ENCODE measurements at regions of chr3 and their contacts with region 1.

Region 1: DNA sequence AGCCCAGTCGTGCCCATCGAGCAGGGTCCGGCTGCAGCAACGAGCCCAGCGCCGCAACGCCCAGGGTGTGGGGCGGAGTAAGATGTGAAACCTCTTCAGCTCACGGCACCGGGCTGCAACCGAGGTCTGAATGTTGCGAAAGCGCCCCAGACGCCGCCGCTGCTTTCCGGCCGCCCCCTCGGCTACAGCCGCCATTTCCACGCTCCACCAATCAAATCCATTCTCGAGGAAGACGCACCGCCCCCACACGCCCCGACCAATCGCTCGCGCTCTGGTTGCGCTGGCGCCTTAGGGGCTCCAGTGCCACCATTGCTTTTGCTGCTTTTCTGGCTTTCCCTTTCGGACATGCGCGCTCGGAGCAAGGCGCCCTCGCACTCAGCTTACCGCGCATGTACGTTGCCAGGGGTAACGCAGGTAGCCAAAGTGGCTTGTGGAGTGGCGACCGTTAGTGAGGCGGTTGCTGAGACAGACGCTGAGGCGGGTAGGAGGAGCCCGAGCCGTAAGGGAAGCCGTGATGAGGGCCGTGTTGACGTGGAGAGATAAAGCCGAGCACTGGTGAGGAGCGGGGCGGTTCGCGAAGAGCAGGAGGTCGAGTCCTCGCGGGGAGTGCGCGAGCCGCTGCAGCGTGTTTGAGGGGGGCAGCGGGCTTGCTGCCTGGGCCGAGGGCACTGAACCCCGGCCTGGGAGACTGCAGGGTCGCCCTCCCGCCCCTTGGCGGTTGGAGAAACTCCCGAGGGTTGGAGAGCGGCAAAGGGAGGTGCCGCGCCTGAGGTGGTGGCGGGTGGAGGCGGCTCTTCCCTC is at the starts of genes IFT122 and MBD4:
- DNase-seq: peak; percentile 99
- ATAC-seq: peak; percentile 90
- H3K4me3 Mint-ChIP-seq: peak within 1 kb of the TSS; percentile 100
- H3K27ac Mint-ChIP-seq: peak within 1 kb of the TSS; percentile 91
- H3K4me1 Mint-ChIP-seq: peaks cover 63% of the 10 kb centered on the region
- H3K27me3 Mint-ChIP-seq: no peaks in the 10 kb centered on the region
- total RNA-seq, gene IFT122: 18.4 to 22.6 TPM
- total RNA-seq, gene MBD4: 51.3 to 52.4 TPM

Region 2: DNA sequence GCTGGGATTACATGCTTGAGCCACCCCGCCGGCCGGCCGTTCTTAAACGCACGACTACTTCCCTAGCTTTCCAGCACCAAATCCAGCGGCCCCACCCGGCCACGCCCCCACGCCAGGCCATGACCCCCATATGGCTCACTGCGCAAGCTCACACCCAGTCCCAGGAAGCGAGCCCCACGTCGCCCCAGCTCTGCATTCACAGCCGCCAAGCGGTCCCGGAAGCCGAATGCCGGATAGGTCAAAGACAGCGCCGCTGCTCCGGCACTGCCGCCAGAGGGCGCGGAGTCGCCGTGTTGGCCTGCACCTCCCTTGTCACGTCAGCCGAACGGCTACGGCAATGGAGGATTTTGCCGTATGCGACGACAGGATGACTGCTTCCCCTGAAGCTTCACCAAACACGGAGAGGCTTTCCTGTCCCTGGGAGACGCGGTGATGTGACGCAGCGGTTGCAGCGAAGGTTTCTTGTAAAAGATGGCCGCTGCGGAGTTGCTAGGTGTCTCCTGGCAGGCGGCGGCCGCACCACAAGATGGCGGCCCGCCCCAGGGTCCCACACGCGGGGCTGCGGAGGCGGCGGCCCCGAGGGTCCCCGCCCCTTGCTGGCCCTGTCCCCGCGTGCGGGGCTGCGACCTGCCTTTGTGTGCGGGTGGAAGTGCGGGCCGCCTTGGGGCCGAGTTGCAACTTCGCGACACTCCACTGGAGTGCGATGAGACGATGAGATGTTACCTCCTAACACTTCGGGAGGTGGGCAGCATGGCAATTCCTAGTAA is 759.2 kb before region 1 on chr3:
- CTCF ChIA-PET with region 1: no interaction called
- POLR2A ChIA-PET with region 1: no interaction called
- intact Hi-C with region 1: loop called in 1 of 2 experiments (anchors 2 kb)
- DNase-seq: peak; percentile 98
- ATAC-seq: peak; percentile 98
- H3K4me3 Mint-ChIP-seq: peak overlapping the region; percentile 96
- H3K27ac Mint-ChIP-seq: peak overlapping the region; percentile 99
- H3K4me1 Mint-ChIP-seq: peaks cover 31% of the 10 kb centered on the region
- H3K27me3 Mint-ChIP-seq: no peaks in the 10 kb centered on the region

Region 3: DNA sequence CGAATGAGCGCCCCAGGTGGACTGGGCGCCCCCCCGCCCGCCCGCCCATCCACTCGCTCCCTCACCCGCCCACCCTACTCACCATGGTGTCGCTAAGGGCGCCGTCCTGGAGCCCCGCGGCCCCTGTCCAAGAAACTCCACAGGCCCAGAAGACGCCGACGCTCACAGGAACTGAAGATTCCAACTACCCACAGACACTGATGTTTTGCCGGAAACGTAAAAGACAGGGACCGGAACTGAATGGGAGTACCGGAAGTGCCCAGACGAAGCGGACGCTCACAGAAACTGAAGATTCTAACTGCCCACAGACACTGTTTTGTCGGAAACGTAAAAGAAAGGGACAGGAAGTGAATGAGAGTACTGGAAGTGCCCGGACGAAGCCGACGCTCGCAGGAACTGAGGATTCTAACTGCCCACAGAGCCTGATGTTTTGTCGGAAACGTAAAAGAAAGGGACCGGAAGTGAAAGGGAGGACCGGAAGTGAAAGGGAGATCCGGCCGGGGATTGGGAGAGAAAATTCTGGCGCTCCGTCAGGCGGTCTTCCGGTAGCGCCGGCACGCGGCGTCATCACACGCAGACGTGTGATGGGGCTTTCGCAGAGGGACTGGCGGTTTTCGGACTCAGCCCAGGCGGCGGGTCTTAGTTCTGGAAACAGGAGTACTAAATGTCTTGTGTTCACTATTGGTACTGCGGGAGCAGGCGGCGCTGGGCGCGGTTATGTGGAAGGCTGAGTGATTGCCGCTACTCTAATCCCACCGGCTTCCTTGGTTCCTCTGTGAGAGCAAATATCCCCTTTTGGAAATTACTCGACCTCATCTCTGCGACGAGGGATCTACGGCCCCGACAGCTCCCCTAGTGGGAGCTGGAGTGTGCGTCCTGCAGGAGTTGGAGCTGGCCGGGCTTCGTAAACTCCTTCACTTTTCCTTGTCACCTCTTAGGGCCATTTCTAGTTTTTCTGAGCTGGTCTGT is 278.8 kb before region 1 on chr3 and contains the start of gene ISY1:
- CTCF ChIA-PET with region 1: interaction called, 3 read pairs
- POLR2A ChIA-PET with region 1: no interaction called
- intact Hi-C with region 1: loop called in 1 of 2 experiments (anchors 1 kb)
- DNase-seq: peak; percentile 93
- ATAC-seq: peak; percentile 81
- H3K4me3 Mint-ChIP-seq: peak within 1 kb of the TSS; percentile 93
- H3K27ac Mint-ChIP-seq: peak within 1 kb of the TSS; percentile 98
- H3K4me1 Mint-ChIP-seq: peaks cover 30% of the 10 kb centered on the region
- H3K27me3 Mint-ChIP-seq: no peaks in the 10 kb centered on the region
- total RNA-seq, gene ISY1: 44.9 to 65.5 TPM

Region 4: GRCh38 chr3:129316131-129317013 is 123.6 kb before region 1 on chr3:
- CTCF ChIA-PET with region 1: no interaction called
- POLR2A ChIA-PET with region 1: interaction called, 4 read pairs
- intact Hi-C with region 1: loop called in 1 of 2 experiments (anchors 1 kb)
- DNase-seq: peak; percentile 93
- ATAC-seq: peak; percentile 39
- H3K4me3 Mint-ChIP-seq: peak overlapping the region; percentile 88
- H3K27ac Mint-ChIP-seq: peak overlapping the region; percentile 58
- H3K4me1 Mint-ChIP-seq: peaks cover 22% of the 10 kb centered on the region
- H3K27me3 Mint-ChIP-seq: no peaks in the 10 kb centered on the region

Region 5: DNA sequence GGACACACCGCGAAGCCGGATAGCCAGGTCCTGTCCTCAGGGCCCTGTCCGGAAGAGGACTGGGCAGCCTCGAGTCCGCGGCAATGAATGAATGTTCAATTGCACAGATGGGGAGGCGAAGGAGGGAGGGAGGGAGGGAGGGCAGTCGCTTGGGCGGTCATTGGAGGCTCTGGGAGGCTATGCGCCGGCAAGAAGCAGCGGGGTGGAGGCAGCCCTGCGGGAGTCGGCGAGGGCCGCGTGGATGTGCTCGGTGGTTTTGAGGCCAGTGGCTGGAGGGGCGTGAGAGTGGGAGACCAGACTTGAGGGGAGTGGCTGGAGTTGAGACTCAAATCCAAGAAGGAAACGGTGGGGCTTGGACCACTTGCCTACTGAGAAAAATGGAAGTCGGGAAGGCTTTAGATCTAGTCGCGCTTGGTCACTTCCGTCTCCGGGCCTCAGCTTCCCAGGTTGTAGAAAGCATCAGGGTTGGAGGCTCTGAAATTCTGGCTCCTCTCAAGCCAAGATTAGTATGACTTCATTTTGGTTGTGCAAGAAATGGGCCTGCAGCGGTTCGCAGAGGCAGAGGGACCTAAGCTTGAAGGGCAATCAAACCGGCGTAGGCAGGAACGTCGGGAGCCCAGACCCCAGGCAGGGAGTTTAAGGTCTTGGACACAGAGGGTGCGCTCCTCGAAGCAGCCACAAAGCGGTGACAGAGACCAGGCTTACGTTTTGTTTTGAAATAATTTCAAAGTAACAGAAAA is 187.6 kb after region 1 on chr3:
- CTCF ChIA-PET with region 1: no interaction called
- POLR2A ChIA-PET with region 1: interaction called, 3 read pairs
- intact Hi-C with region 1: loop called in 1 of 2 experiments (anchors 1 kb)
- DNase-seq: peak; percentile 82
- ATAC-seq: peak; percentile 67
- H3K4me3 Mint-ChIP-seq: peak overlapping the region; percentile 88
- H3K27ac Mint-ChIP-seq: peak overlapping the region; percentile 67
- H3K4me1 Mint-ChIP-seq: peaks cover 13% of the 10 kb centered on the region
- H3K27me3 Mint-ChIP-seq: no peaks in the 10 kb centered on the region

Region 6: DNA sequence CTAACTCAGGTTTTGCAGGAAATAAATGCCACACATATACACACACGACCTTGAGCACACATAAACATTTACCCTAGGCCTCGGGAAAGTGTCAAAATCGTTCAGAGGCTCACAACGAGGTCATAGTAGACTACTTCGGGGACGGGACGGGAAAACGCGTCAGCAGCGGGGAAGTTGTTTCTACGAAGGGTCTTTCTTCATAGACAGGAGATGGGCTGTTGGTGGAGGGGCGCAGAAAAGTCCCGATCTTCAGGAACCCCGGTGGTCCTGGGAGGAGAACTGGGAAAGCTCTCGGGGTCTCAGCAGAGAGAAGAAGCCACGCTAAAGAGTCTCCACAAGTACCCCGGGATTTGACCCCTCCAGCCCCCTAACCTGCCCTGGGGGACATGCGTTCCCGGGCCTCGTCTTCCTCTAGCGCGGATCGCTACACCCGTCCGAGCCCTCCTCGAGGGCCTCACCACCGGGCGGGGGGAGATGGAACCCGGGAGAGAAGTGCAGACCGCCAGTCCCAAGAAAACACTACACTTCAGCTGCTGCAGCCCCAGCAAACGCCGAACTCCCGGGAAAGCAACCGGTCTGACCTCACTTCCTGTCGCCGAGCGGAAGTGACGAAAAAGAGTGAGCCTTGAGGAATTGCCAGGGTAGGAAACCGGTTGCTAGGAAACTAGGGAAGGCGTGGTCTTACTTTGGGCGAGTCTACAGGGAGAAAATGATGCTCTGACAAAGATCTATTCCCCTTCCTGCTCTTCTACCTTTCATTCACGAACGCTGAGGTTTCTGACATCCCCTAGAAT is 1306.4 kb after region 1 on chr3 and contains the start of gene PIK3R4:
- CTCF ChIA-PET with region 1: no interaction called
- POLR2A ChIA-PET with region 1: no interaction called
- intact Hi-C with region 1: loop called in 1 of 2 experiments (anchors 10 kb)
- DNase-seq: peak; percentile 96
- ATAC-seq: peak; percentile 83
- H3K4me3 Mint-ChIP-seq: no peak within 1 kb of the TSS
- H3K27ac Mint-ChIP-seq: peak within 1 kb of the TSS; percentile 95
- H3K4me1 Mint-ChIP-seq: peaks cover 42% of the 10 kb centered on the region
- H3K27me3 Mint-ChIP-seq: no peaks in the 10 kb centered on the region
- total RNA-seq, gene PIK3R4: 27.3 to 32.3 TPM